Psoas muscle (tissue), 8 donors: ENCODE measurements at regions of chr2 and their contacts with region 1.

Region 1: DNA sequence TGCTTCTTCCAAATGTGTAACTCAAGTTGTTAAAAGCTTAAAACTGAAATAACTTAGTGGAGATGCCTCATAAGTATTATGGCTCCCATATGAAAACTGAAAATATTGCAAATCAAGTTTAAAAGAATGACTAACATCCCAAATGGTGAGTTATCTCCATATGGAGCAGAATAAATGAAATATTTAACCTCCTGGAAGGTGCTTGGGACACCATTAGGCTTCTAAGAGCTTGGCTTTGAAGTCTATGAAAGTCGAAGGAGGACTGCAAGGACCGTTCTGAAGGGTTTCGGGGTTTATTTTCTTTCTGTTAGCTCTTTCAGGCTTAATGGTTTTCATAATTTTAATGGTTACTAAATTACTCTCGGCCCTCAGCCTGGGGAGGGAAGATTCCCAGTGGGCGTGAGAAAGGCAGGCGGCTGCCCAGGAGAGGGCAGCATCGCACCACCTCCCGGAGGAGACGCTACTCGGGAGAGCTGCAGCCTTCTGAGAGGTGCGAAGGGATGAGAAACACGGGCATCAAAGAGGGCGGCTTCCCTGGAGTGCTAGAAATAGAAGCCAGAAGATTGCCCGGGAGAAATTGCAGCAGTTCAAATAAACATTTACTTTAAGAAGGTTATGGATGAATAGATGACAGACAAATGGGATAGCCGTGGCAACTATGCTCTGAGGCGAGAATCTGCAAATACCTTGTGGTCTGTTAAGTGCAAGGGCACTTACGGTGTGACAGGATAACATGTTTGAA is 43.1 kb downstream of the MAP3K19 start:
- DNase-seq: peak; percentile 69 to 82
- ATAC-seq: peak; percentile 92 to 99 (median 96)
- H3K4me3 ChIP-seq: no peak overlapping the region
- H3K27ac ChIP-seq: no peak overlapping the region
- H3K4me1 ChIP-seq: no peaks in the 10 kb centered on the region
- H3K27me3 ChIP-seq: peaks cover 2 to 13% (median 3%) of the 10 kb centered on the region in 3 donors
- CTCF ChIP-seq: peak; percentile 91

Region 2: GRCh38 chr2:135052042-135052876 is 48.1 kb after region 1 on chr2 and contains the start of gene RAB3GAP1:
- intact Hi-C with region 1: loop called in 1 of 2 experiments (anchors 5 kb)
- DNase-seq: peak; percentile 69 to 81
- ATAC-seq: peak; percentile 88 to 95 (median 90)
- H3K4me3 ChIP-seq: peak within 1 kb of the TSS; percentile 85
- H3K27ac ChIP-seq: peak within 1 kb of the TSS; percentile 95
- H3K4me1 ChIP-seq: peaks cover 32% of the 10 kb centered on the region
- H3K27me3 ChIP-seq: no peaks in the 10 kb centered on the region
- CTCF ChIP-seq: no peak
- total RNA-seq, gene RAB3GAP1: 37.7 to 52.7 (median 42.9) TPM

Region 3: GRCh38 chr2:135099802-135100483 is 95.8 kb after region 1 on chr2:
- intact Hi-C with region 1: no loop called
- DNase-seq: no peak
- ATAC-seq: no peak
- H3K4me3 ChIP-seq: no peak overlapping the region
- H3K27ac ChIP-seq: no peak overlapping the region
- H3K4me1 ChIP-seq: no peaks in the 10 kb centered on the region
- H3K27me3 ChIP-seq: no peaks in the 10 kb centered on the region
- CTCF ChIP-seq: no peak

Region 4: GRCh38 chr2:135113322-135113721 is 109.1 kb after region 1 on chr2:
- intact Hi-C with region 1: loop called in 1 of 2 experiments (anchors 10 kb)
- DNase-seq: no peak
- ATAC-seq: peak in 3 of 4 donors; percentile 51 to 63 (median 63)
- H3K4me3 ChIP-seq: no peak overlapping the region
- H3K27ac ChIP-seq: no peak overlapping the region
- H3K4me1 ChIP-seq: no peaks in the 10 kb centered on the region
- H3K27me3 ChIP-seq: no peaks in the 10 kb centered on the region
- CTCF ChIP-seq: no peak

Region 5: DNA sequence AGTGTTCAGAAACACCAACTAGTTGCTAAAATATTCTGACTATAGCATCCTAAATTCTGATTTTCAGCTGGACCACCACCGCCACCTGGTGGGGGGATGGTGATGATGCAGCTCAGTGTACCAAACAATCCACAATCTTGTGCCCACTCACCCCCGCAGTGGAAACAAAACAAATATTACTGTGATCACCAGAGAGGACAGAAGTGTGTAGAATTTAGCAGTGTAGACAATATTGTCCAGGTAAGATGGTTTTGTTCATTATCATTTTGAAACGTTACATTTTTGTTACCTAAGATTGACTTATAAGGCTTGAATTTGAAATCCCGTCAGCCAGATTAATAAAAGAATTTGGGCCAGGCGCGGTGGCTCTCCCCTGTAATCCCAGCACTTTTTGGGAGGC is 705.8 kb after region 1 on chr2:
- intact Hi-C with region 1: loop called (anchors 2 to 5 kb)
- DNase-seq: peak; percentile 50 to 70
- ATAC-seq: peak in 3 of 4 donors; percentile 57 to 86 (median 68)
- H3K4me3 ChIP-seq: no peak overlapping the region
- H3K27ac ChIP-seq: no peak overlapping the region
- H3K4me1 ChIP-seq: peaks cover 5% of the 10 kb centered on the region
- H3K27me3 ChIP-seq: no peaks in the 10 kb centered on the region
- CTCF ChIP-seq: peak; percentile 94